Activated CD4-positive, alpha-beta T cell treated with anti-CD3 and anti-CD28 coated beads for 36 hours (primary cell): ENCODE measurements at regions of chr17 and their contacts with region 1.

Region 1: GRCh38 chr17:6969323-6969726 is 26.5 kb upstream of the ALOX12 start:
- DNase-seq: no peak
- ATAC-seq: peak; percentile 69
- H3K4me3 Mint-ChIP-seq: no peak overlapping the region
- H3K27ac Mint-ChIP-seq: peak overlapping the region; percentile 82
- H3K4me1 Mint-ChIP-seq: peaks cover 15% of the 10 kb centered on the region
- H3K27me3 Mint-ChIP-seq: no peaks in the 10 kb centered on the region

Region 2: DNA sequence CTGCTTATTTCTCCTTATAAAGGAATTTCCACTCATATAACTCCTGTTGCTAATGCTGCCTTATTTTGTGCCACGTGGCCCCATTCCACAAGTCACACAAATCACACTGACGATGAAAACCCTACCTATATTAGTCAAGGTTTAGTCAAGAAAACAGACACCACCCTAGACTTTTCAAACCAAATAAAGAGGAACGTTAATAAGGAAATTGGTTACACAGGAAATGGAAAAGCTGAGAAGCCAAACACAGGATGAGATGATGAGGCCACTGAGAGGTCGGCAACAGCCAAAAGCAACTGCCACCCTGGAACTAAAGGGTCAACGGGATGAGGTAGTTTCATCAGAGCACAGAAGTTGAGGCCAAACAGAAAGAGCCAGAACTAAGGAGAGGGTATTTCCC is 20.8 kb before region 1 on chr17:
- CTCF ChIA-PET with region 1: no interaction called
- POLR2A ChIA-PET with region 1: no interaction called
- intact Hi-C with region 1: loop called in 1 of 2 experiments (anchors 1 kb)
- DNase-seq: peak; percentile 26
- ATAC-seq: peak; percentile 86
- H3K4me3 Mint-ChIP-seq: no peak overlapping the region
- H3K27ac Mint-ChIP-seq: peak overlapping the region; percentile 35
- H3K4me1 Mint-ChIP-seq: peaks cover 12% of the 10 kb centered on the region
- H3K27me3 Mint-ChIP-seq: no peaks in the 10 kb centered on the region

Region 3: GRCh38 chr17:6995431-6996255 is 26.3 kb after region 1 on chr17 and contains the start of gene ALOX12:
- CTCF ChIA-PET with region 1: no interaction called
- POLR2A ChIA-PET with region 1: no interaction called
- intact Hi-C with region 1: no loop called
- DNase-seq: no peak
- ATAC-seq: no peak
- H3K4me3 Mint-ChIP-seq: no peak within 1 kb of the TSS
- H3K27ac Mint-ChIP-seq: no peak within 1 kb of the TSS
- H3K4me1 Mint-ChIP-seq: no peaks in the 10 kb centered on the region
- H3K27me3 Mint-ChIP-seq: no peaks in the 10 kb centered on the region
- total RNA-seq, gene ALOX12: not detected